ENCODE measurements at regions of chr22 and their contacts with region 1.

Region 1: GRCh38 chr22:23539135-23539838 is 40.8 kb downstream of the IGLL1 start:
- DNase-seq: peak; percentile 92
- H3K4me3 ChIP-seq: no peak overlapping the region
- H3K27ac ChIP-seq: no peak overlapping the region
- H3K4me1 ChIP-seq: peaks cover 29% of the 10 kb centered on the region
- CTCF ChIP-seq: peak; percentile 84

Region 2: DNA sequence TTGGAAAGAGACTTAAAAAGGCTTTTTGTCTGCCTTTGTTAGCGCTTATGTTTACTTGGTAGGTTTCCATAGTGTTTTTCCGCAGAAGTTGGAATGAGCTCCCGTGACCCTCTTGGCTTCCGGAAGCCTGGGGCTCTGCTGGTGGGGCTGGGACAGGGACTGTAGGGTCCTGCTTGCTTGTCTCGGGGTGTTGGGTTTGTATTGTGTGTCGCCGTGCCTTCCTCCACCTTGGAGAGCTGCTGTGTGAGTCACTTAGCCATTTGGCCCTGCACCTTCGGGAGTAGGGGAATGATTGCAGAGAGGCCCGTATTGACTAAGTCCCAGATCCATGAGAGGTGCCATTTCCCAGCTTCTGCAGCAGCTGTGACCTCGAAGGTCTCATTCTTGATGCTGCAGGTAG is 246.4 kb before region 1 on chr22:
- CTCF ChIA-PET with region 1: no interaction called
- POLR2A ChIA-PET with region 1: no interaction called
- intact Hi-C with region 1: no loop called
- DNase-seq: no peak
- H3K4me3 ChIP-seq: no peak overlapping the region
- H3K27ac ChIP-seq: no peak overlapping the region
- H3K4me1 ChIP-seq: no peaks in the 10 kb centered on the region
- CTCF ChIP-seq: no peak

Region 3: DNA sequence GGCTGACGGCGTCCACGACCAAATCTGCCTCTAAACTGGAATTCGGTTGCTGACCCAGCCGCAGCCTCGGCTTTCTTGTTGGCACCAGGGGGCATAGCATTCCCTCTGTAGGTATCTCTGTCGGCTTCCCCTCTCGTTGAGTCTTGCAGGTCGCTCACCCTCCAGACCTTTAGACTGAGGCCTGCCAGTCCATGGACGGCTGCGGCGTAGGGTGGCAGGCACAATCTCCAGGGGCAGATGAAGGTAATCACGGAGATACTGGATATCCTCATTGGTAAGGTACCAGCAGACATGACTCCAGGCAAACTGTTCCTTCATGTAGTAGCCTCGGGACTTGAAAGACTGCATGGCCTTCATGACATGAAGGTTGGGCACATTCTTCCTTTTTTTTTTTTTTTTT is 216.7 kb before region 1 on chr22:
- CTCF ChIA-PET with region 1: no interaction called
- POLR2A ChIA-PET with region 1: no interaction called
- intact Hi-C with region 1: loop called (anchors 5 kb)
- DNase-seq: no peak
- H3K4me3 ChIP-seq: no peak overlapping the region
- H3K27ac ChIP-seq: no peak overlapping the region
- H3K4me1 ChIP-seq: no peaks in the 10 kb centered on the region
- CTCF ChIP-seq: peak; percentile 22; the same call in 1 of the 2 replicates

Region 4: DNA sequence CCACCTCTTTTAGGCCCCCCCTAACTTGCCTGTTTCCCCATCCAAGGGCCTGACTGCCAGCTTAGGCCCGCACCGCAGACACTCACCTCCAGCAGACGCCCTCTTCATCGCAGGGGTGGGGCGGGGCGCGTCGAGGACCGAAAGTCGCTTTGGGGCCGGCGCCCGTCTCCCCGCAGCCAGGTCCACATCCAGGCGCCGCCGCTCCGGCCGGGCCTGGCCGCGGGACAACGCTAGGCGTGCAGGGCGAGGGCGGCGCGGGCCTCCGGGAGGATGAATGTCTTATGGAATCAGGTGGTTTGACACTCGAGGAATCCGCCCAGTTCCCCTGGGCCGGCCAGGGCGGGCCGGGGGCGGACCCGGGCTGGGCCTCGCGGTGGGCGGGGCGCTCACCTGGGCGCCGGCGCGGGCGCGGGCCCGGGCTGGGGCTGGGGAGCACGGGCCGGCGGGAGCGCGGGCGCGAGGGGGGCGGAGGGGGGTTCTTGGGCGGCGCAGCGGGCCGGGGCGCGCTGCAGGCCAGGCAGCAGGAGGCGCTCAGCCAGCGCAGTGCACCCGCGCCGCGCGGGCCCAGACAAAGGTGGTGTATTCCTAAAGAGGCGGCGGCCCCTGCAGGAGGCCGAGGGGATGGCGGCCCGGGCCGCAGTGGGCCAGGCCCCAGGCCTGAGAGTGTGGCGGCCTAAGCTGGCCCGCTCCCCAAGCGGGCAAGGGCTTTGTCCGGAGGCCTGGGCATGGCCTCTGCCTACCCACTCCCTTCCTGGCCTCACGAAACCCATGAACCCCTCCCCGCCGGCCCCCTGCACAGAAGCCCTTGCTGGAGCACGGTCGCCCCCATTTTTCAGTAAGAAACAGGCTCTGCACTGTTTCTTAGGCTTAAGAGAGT is 136.8 kb before region 1 on chr22:
- CTCF ChIA-PET with region 1: no interaction called
- POLR2A ChIA-PET with region 1: no interaction called
- intact Hi-C with region 1: loop called (anchors 1 kb)
- DNase-seq: peak; percentile 86
- H3K4me3 ChIP-seq: peak overlapping the region; percentile 62
- H3K27ac ChIP-seq: no peak overlapping the region
- H3K4me1 ChIP-seq: peaks cover 6% of the 10 kb centered on the region
- CTCF ChIP-seq: peak; percentile 75

Region 5: DNA sequence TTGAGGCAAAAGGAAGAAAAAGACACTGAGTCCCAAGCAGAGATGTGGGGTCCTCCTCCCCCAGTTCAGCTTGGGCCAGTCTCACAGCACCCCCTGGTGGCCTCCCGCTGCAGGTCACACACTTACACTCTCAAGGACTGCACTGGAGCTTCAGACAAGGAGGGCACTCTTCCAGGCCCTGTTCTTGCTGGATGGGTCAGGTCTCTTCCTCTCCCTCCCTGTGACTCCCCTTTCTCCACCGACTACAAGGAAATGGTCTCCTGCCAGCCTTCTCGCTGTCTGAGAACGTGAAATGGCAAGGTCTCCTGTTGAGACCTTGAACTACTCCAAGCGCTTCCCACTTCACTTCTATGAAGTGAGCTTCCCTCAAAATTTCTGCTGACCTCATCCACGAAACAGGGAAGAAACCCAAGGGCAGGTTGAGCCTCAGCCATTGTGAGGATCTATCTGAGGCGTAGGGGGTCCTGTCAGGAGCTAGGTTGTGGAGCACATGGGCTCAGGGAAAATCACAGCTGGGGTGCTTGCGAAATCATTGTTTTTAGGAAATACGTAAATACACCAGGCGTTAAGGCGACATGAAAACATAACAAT is 52.0 kb after region 1 on chr22:
- CTCF ChIA-PET with region 1: no interaction called
- POLR2A ChIA-PET with region 1: no interaction called
- intact Hi-C with region 1: loop called (anchors 1 kb)
- DNase-seq: peak; percentile 66
- H3K4me3 ChIP-seq: no peak overlapping the region
- H3K27ac ChIP-seq: no peak overlapping the region
- H3K4me1 ChIP-seq: no peaks in the 10 kb centered on the region
- CTCF ChIP-seq: peak; percentile 93

Region 6: GRCh38 chr22:23849009-23850006 is 310.0 kb after region 1 on chr22:
- CTCF ChIA-PET with region 1: no interaction called
- POLR2A ChIA-PET with region 1: no interaction called
- intact Hi-C with region 1: loop called (anchors 1 kb)
- DNase-seq: peak; percentile 86
- H3K4me3 ChIP-seq: peak overlapping the region; percentile 54
- H3K27ac ChIP-seq: peak overlapping the region; percentile 82
- H3K4me1 ChIP-seq: peaks cover 75% of the 10 kb centered on the region
- CTCF ChIP-seq: peak; percentile 90